ENCODE measurements at regions of chr5 and their contacts with region 1.

Region 1: GRCh38 chr5:164265566-164265965 is 760.1 kb downstream of the MAT2B start:
- DNase-seq: no peak
- H3K4me3 ChIP-seq: no peak overlapping the region
- H3K27ac ChIP-seq: no peak overlapping the region
- H3K4me1 ChIP-seq: no peaks in the 10 kb centered on the region
- H3K27me3 ChIP-seq: no peaks in the 10 kb centered on the region
- CTCF ChIP-seq: no peak
- EP300 ChIP-seq: no peak
- POLR2A ChIP-seq: no peak

Region 2: DNA sequence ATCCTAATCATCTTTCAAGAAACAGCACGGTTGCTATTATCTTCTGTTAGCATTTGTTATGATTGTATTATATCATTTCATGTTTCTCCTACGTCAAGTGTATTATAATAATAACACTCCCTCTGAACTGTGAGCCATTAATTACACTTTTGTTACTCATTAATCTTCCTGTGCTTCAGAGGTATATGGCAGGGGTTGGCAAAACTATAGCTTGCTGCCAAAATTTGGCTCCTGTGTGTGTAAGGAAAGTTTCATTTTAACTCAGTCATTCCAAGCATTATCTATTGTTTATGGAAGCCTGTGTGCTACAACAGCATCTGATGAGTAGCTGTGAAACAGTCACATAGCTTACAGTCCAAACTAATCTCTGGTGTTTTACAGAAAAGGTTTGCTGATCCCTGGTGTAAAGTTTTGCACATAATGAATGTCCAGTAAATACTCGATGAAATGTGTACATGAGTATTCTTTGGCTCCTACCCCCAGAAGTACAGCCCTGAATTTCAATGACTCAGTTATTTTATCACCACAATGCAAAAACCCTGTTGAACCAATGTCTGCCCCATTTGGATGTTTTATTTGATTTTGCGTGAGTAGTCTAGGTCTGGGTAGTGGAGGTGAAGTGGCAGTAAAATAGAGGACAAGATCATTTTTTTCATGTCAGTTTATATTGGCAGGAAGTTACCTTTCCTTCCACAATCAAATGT is 111.9 kb before region 1 on chr5:
- in situ Hi-C with region 1: no loop called
- intact Hi-C with region 1: no loop called
- DNase-seq: no peak
- H3K4me3 ChIP-seq: no peak overlapping the region
- H3K27ac ChIP-seq: no peak overlapping the region
- H3K4me1 ChIP-seq: no peaks in the 10 kb centered on the region
- H3K27me3 ChIP-seq: no peaks in the 10 kb centered on the region
- CTCF ChIP-seq: no peak
- EP300 ChIP-seq: no peak
- POLR2A ChIP-seq: no peak

Region 3: GRCh38 chr5:165242646-165243045 is 977.1 kb after region 1 on chr5:
- in situ Hi-C with region 1: no loop called
- intact Hi-C with region 1: loop called (anchors 5 kb)
- DNase-seq: no peak
- H3K4me3 ChIP-seq: no peak overlapping the region
- H3K27ac ChIP-seq: no peak overlapping the region
- H3K4me1 ChIP-seq: no peaks in the 10 kb centered on the region
- H3K27me3 ChIP-seq: no peaks in the 10 kb centered on the region
- CTCF ChIP-seq: no peak
- EP300 ChIP-seq: no peak
- POLR2A ChIP-seq: no peak